MCF 10A (cell line): ENCODE measurements at regions of chr1 and their contacts with region 1.

Region 1: DNA sequence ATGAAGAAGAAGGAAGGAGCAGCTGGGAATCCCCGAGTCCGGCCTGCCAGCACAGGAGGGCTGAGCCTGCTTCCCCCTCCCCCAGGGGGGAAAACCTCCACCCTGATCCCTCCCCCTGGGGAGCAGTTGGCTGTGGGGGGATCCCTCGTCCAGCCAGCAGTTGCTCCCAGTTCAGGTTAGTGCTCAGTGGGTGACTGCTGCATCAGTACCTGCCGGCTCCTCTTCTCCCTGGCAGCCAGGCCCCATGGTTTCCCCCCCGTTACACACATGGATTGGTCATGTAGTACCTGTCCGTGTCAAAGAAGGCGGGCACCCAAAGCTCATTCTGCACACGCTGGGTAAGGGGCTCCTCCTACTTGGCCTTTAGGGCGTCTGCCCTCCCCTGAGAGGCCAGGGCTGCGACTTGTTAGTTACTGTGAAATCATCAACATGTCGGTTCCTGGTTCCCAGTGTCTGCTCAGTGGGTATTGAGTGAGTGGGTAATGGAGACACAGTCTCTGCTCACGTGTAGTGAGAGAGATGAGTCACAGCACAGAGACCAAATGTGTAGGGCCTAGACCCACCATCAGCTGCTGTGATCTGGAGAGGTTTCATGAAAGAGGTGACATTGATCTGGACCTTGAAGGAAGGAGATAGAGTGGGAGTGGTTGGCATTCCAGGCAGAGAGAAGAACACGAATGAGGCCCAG is 11.5 kb downstream of the NECAP2 start:
- DNase-seq: no peak
- H3K4me3 Mint-ChIP-seq: no peak overlapping the region
- H3K27ac Mint-ChIP-seq: no peak overlapping the region
- H3K4me1 Mint-ChIP-seq: no peaks in the 10 kb centered on the region
- H3K27me3 Mint-ChIP-seq: no peaks in the 10 kb centered on the region
- CTCF ChIP-seq: no peak

Region 2: DNA sequence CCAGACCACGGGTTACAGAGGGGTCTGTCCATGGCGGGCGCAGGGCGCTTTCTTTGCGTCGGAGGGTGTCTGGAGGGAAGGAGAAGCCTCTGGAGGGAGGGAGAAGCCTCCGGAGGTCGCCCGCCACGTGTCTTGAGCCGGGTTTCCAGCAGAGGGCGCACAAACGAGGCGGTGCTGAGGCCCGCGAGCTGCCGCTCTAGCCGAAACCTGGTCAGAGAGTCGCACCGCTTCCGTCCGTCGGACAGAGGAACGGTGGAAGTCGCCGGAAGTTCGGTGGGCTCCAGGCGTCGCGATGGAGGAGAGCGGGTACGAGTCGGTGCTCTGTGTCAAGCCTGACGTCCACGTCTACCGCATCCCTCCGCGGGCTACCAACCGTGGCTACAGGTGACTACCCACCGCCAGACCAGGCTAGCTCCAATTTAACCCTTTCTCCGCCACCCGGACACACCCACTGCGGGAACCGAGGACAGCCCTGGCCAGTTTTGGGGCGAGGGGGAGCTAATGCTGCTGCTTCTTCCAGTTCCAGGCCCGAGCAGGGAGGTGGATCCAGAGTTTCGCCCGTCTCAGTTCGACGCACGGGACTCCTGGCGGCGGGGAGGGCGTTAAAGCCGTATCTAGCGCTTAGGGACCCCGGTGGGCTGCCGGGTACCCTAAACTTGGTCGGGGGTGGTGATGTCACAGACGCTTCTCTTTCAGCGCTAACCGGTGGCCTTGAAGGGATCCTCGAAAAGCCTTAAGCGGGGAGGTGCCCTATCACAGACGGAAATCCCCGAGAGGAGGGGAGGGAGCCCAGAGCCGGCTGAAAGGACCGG is 11.3 kb before region 1 on chr1 and contains the start of gene NECAP2:
- CTCF ChIA-PET with region 1: interaction called, 13 read pairs
- POLR2A ChIA-PET with region 1: interaction called, 14 read pairs
- intact Hi-C with region 1: no loop called
- DNase-seq: peak; percentile 88
- H3K4me3 Mint-ChIP-seq: peak within 1 kb of the TSS; percentile 93
- H3K27ac Mint-ChIP-seq: peak within 1 kb of the TSS; percentile 89
- H3K4me1 Mint-ChIP-seq: peaks cover 11% of the 10 kb centered on the region
- H3K27me3 Mint-ChIP-seq: no peaks in the 10 kb centered on the region
- CTCF ChIP-seq: peak; percentile 89
- total RNA-seq, gene NECAP2: 34.1 and 41.4 TPM in 2 replicates

Region 3: DNA sequence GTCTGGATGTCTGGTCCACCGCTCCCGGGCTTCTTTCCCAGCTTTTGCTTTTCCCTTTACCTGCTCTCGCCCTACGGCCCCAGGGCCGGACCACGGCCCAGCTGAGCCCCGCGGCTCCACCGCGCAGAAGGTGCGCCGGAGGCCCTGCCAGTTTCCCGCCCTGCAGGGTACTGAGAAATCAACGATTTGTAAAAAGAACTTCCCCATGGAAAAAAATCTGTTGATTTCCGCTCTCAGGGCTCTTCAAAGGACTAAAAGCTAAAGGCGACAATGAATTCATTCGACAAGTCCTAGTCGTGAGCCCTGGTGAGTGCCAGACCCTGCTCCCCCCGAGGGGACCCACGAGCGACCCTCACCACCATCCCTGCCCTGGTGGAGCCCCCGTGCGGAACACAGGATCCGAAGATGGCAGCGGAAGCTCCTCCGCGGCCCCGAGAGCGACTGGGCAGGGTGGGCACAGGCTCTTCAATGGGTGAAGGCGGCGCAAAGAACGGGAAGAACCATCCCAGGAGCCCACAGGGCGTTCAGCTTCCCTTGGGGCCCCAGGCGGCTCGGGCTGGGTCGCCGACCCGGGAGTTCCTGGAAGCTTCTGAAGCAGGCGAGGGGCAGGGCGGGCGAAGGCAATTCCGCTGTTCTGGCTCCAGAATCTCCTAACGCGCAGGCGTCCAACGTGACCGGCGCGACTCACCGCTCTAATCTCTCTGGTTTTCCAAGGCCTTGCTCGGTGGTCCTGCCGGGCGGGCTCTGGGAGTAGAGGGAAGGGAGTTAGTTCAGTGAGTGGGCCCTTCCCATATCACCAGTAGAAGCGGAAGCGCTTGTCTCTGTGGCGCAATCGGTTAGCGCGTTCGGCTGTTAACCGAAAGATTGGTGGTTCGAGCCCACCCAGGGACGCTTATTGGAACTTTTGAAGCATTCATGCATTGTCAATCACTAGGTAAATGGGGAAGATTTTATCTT is 437.2 kb after region 1 on chr1:
- CTCF ChIA-PET with region 1: no interaction called
- POLR2A ChIA-PET with region 1: no interaction called
- intact Hi-C with region 1: no loop called
- DNase-seq: no peak
- H3K4me3 Mint-ChIP-seq: no peak overlapping the region
- H3K27ac Mint-ChIP-seq: no peak overlapping the region
- H3K4me1 Mint-ChIP-seq: no peaks in the 10 kb centered on the region
- H3K27me3 Mint-ChIP-seq: peaks cover 16% of the 10 kb centered on the region
- CTCF ChIP-seq: no peak